ENCODE measurements at regions of chr6 and their contacts with region 1.

Region 1: GRCh38 chr6:56359201-56359899 is 112.0 kb upstream of the COL21A1 start:
- DNase-seq: peak; percentile 52
- CTCF ChIP-seq: peak; percentile 72

Region 2: DNA sequence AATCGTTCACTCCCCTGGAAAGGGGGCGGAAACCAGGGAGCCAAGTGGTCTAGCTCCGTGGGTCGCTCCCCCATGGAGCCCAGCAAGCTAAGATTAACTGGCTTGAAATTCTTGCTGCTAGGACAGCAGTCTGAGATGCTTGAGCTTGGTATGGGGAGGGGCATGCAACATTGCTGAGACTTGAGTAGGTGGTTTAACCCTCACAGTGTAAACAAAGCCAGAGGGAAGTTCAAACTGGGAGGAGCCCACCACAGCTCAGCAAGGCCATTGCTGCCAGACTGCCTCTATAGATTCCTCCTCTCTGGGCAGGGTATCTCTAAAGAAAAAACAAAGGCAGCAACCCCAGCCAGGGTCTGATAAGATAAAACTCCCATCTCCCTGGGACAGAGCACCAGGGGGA is 155.2 kb before region 1 on chr6:
- in situ Hi-C with region 1: no loop called
- DNase-seq: no peak
- CTCF ChIP-seq: no peak

Region 3: GRCh38 chr6:56541030-56541600 is 181.8 kb after region 1 on chr6:
- in situ Hi-C with region 1: no loop called
- DNase-seq: no peak
- CTCF ChIP-seq: no peak

Region 4: GRCh38 chr6:56570413-56571359 is 211.3 kb after region 1 on chr6:
- in situ Hi-C with region 1: loop called (anchors 10 kb)
- DNase-seq: peak; percentile 31
- CTCF ChIP-seq: peak; percentile 50

Region 5: DNA sequence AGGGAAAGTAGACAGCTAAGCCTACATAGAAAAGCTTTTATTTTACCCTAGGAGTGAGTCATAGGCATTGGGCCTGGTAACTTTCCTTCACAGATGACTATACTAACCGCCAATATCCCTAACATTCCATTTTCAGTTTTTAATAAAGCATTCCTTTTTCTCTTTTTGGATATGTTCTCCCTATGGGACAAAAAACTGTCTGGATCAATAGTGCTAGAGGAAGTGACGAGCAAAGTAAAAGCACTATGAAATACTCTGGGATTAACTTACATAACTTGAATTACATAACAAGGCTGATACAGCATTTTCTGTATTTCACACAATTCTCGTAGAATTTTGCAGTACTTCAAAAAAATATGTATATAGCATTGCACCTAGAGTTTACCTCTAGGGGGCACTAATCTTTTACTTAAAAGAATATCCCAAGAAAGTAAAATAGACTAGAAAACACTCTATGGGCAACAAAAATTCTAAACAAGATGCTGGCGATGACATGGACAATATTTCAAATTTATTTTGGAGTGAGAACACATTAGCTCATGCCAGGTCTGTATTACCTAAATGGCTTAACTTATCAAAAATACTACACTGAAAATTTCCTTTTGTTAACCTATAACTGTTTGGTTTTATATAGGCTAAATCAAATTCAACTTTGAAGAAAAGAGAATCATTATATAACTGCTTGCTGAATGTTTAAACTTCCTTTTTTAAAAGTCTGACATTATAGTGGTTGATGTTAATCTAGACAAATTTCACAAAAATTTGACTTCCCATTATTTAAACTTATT is 349.7 kb after region 1 on chr6:
- in situ Hi-C with region 1: loop called (anchors 25 kb)
- DNase-seq: peak; percentile 44
- CTCF ChIP-seq: peak; percentile 51

Region 6: GRCh38 chr6:56851541-56852259 is 492.4 kb after region 1 on chr6:
- in situ Hi-C with region 1: loop called (anchors 25 kb)
- DNase-seq: peak; percentile 67
- CTCF ChIP-seq: peak; percentile 69

Region 7: GRCh38 chr6:57021086-57021720 is 661.9 kb after region 1 on chr6:
- in situ Hi-C with region 1: loop called (anchors 25 kb)
- DNase-seq: peak; percentile 56
- CTCF ChIP-seq: peak; percentile 52

Region 8: DNA sequence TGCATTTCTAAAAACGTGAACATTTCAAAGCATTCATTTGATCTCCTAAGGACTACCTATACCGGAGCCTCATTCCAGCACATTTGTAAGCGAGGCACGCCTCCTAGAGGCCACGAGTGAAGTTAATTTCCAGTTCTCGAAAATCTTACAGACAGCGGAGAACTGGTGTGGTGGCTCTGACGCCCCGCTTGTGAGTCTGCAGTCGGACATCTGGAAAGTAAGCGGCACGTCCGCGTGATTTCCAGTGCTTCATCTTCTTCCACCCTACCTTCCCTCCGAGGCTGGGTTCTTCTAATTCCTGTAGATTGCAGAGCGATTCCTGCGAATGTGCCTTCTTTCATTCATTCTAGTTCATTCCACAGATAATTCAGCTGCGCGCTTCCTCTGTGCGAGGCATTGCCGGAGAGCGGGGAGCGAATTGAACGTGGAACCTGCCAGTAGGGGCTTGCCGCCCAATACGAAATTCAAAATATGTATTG is 957.3 kb after region 1 on chr6:
- in situ Hi-C with region 1: loop called (anchors 25 kb)
- DNase-seq: peak; percentile 86
- CTCF ChIP-seq: peak; percentile 81

Measured in GM13977 (cell line).